Caco-2 (cell line): ENCODE measurements at regions of chr2 and their contacts with region 1.

Region 1: GRCh38 chr2:157825885-157826284 is 50.2 kb downstream of the ACVR1 start:
- DNase-seq: peak; percentile 47 to 65
- H3K4me3 ChIP-seq: no peak overlapping the region
- H3K4me3 Mint-ChIP-seq: no peak overlapping the region
- H3K27ac Mint-ChIP-seq: peak overlapping the region; percentile 74
- H3K4me1 ChIP-seq: 0 out of 2 replicates have a peak, but pooled peaks cover 3% of the 10 kb centered on the region
- H3K4me1 Mint-ChIP-seq: peaks cover 15% of the 10 kb centered on the region
- H3K27me3 ChIP-seq: no peaks in the 10 kb centered on the region
- H3K27me3 Mint-ChIP-seq: no peaks in the 10 kb centered on the region
- CTCF ChIP-seq: no peak

Region 2: DNA sequence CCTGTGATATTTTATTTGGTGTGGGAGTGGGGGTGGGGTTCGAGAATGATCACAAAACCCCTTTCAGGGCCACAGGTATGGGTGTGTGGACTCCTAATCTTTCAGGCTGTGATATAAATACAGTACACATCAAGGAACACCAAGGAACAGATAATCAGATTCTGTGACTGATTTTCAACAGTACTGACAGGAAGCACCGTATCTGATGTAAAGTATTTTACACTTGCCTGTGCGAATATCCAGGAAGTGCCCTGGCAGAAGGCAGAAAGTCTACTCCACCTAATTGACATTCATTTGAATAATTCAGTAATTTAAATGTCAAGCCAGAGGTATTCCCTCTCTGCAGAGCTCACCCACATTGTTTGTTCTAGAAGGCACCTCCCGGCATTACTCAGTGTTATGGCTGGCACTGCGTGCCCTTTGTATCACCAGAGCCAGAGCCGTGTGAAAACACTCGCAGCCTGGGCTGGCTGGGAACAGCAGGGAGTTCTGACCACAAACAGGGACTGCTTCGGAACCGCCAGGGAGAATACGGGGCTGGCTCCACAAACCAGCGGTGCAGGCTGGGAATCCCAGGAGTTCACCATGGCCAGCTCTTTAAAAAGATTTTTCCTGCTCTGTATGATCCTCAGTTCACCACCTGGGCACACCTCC is 41.6 kb before region 1 on chr2:
- CTCF ChIA-PET with region 1: no interaction called
- POLR2A ChIA-PET with region 1: no interaction called
- intact Hi-C with region 1: loop called (anchors 5 kb)
- DNase-seq: no peak
- H3K4me3 ChIP-seq: no peak overlapping the region
- H3K4me3 Mint-ChIP-seq: no peak overlapping the region
- H3K27ac Mint-ChIP-seq: no peak overlapping the region
- H3K4me1 ChIP-seq: peaks cover 6% of the 10 kb centered on the region; the same call in 1 of the 2 replicates
- H3K4me1 Mint-ChIP-seq: peaks cover 6% of the 10 kb centered on the region
- H3K27me3 ChIP-seq: no peaks in the 10 kb centered on the region
- H3K27me3 Mint-ChIP-seq: no peaks in the 10 kb centered on the region
- CTCF ChIP-seq: no peak